ENCODE measurements at regions of chr5 and their contacts with region 1.

Region 1: GRCh38 chr5:139844472-139845145 is 49.0 kb downstream of the PSD2 start:
- DNase-seq: peak; percentile 94
- ATAC-seq: peak; percentile 86
- H3K4me3 Mint-ChIP-seq: no peak overlapping the region
- H3K27ac Mint-ChIP-seq: no peak overlapping the region
- H3K4me1 Mint-ChIP-seq: peaks cover 9% of the 10 kb centered on the region
- H3K27me3 Mint-ChIP-seq: peaks cover 51% of the 10 kb centered on the region
- CTCF ChIP-seq: peak; percentile 58

Region 2: DNA sequence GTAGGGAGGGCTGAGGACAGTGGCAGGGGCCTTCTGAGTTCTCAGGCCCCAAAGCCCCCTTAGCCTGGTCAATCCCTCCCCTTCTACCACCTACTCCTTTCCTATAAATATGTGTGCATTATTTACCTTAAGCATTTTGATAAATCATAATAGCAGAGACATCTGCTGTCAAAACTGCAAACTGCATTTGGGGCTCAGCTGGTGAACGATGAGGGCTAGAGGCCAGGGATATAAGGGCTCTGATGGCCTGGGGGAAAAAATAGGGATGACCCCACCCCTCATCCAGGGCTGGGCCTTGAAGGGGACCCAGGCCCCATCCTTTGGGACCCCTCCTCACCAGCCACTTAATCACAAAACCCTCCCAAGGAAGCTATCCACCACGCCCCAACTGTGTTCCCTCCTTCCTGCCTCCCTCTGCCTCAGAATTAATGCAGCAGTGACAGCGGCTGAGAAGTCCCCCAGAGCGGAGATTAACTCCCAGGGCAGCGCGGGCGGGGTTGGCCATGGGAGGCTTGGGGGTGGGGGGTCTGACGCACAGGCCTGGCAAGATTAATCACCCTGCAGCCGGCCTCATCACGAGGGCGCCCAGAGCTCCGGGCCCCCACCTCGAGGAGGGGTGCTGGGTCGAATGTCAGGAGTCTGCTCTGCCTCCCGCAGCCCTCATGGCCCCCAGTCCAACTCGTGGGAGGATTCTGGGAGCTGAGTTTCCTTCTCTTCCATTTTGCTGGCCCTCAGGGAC is 154.4 kb before region 1 on chr5:
- CTCF ChIA-PET with region 1: no interaction called
- POLR2A ChIA-PET with region 1: no interaction called
- DNase-seq: no peak
- ATAC-seq: peak; percentile 11
- H3K4me3 Mint-ChIP-seq: peak overlapping the region; percentile 24; the same call in 1 of the 2 replicates
- H3K27ac Mint-ChIP-seq: peak overlapping the region; percentile 19; the same call in 1 of the 2 replicates
- H3K4me1 Mint-ChIP-seq: peaks cover 63% of the 10 kb centered on the region
- H3K27me3 Mint-ChIP-seq: peaks cover 24% of the 10 kb centered on the region
- CTCF ChIP-seq: no peak

Region 3: GRCh38 chr5:139863855-139864558 is 19.4 kb after region 1 on chr5:
- CTCF ChIA-PET with region 1: interaction called, 13 read pairs
- POLR2A ChIA-PET with region 1: no interaction called
- DNase-seq: peak; percentile 81
- ATAC-seq: peak; percentile 84
- H3K4me3 Mint-ChIP-seq: no peak overlapping the region
- H3K27ac Mint-ChIP-seq: no peak overlapping the region
- H3K4me1 Mint-ChIP-seq: peaks cover 12% of the 10 kb centered on the region
- H3K27me3 Mint-ChIP-seq: peaks cover 6% of the 10 kb centered on the region
- CTCF ChIP-seq: peak; percentile 89

Region 4: GRCh38 chr5:139903795-139904565 is 59.4 kb after region 1 on chr5:
- CTCF ChIA-PET with region 1: no interaction called
- POLR2A ChIA-PET with region 1: no interaction called
- DNase-seq: peak; percentile 67
- ATAC-seq: peak; percentile 50
- H3K4me3 Mint-ChIP-seq: peak overlapping the region; percentile 71
- H3K27ac Mint-ChIP-seq: no peak overlapping the region
- H3K4me1 Mint-ChIP-seq: peaks cover 12% of the 10 kb centered on the region
- H3K27me3 Mint-ChIP-seq: peaks cover 49% of the 10 kb centered on the region
- CTCF ChIP-seq: no peak

Region 5: DNA sequence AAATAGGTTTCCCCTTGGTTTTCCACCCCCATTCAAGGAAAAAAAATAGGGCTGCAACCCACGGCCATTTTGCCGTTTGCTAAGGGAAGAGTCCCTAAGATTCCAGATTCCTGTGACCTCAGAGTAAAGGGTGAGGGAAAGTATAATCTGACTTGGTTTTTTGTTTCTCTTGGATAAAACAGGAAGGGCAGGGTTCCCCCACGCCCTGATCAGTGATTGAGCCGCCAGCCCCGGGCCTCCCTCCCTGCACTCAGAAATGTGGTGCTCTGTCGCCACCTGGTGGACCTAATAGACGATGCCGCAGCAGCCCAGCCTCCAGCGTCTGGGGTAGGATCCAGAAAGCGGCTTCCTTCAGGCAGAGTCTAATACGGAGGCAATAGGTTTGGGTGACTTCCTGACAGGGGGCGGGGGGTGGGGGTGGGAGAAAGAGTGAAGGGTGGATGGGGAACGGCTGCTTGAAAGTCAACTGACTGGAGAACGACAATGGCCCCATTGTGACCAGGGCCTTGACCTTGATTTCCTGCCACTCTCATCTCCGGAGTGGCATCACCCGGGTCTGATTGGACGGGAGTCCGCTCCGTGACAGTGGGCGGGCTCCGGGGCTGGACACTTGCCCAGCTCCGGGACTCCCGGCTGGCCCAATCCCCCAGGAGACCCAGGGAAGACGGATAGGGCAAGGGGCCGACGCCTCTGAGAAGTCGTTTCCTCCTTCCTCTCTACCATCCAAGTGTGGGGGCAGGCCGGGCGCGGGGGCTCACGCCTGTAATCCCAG is 312.6 kb after region 1 on chr5:
- CTCF ChIA-PET with region 1: no interaction called
- POLR2A ChIA-PET with region 1: no interaction called
- DNase-seq: peak; percentile 94
- ATAC-seq: peak; percentile 91
- H3K4me3 Mint-ChIP-seq: peak overlapping the region; percentile 67
- H3K27ac Mint-ChIP-seq: no peak overlapping the region
- H3K4me1 Mint-ChIP-seq: peaks cover 28% of the 10 kb centered on the region
- H3K27me3 Mint-ChIP-seq: peaks cover 17% of the 10 kb centered on the region
- CTCF ChIP-seq: peak; percentile 86

Measured in WTC11 (cell line).